Activated B cell treated with CpG ODN at 0.5 μM for 24 hours (primary cell): ENCODE measurements at regions of chr6 and their contacts with region 1.

Region 1: DNA sequence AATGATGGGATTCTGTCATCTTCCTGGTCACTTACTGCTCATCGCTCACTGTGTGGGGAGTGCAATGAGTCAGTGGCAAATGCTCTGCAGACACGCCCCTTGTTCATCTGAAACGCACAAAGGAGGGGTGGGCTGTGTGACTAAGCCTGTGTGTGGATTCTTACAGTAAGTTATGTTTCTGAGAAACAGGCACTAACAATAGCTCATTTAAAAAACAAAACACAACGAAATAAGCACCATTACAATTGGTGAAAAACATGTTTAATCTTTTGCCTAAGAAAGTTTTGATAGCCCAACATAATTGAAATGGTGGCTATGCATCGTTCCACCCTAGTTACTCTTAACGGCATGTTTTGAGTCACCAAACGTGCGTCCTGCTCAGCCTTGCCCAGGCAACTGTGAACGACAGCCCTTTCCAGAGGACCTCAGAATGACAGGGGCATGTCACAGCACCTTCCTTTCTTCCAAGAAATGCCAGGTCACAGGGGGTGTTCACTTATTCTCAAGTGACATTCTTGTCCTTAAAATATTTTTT is 118.4 kb upstream of the SGK1 start:
- DNase-seq: no peak
- ATAC-seq: peak; percentile 90
- H3K4me3 Mint-ChIP-seq: peak overlapping the region; percentile 70
- H3K27ac Mint-ChIP-seq: peak overlapping the region; percentile 79
- H3K4me1 Mint-ChIP-seq: peaks cover 23% of the 10 kb centered on the region
- H3K27me3 Mint-ChIP-seq: no peaks in the 10 kb centered on the region
- CTCF ChIP-seq: no peak

Region 2: GRCh38 chr6:133644892-133645619 is 791.3 kb before region 1 on chr6:
- CTCF ChIA-PET with region 1: no interaction called
- POLR2A ChIA-PET with region 1: no interaction called
- intact Hi-C with region 1: no loop called
- DNase-seq: no peak
- ATAC-seq: no peak
- H3K4me3 Mint-ChIP-seq: no peak overlapping the region
- H3K27ac Mint-ChIP-seq: no peak overlapping the region
- H3K4me1 Mint-ChIP-seq: no peaks in the 10 kb centered on the region
- H3K27me3 Mint-ChIP-seq: no peaks in the 10 kb centered on the region
- CTCF ChIP-seq: no peak

Region 3: DNA sequence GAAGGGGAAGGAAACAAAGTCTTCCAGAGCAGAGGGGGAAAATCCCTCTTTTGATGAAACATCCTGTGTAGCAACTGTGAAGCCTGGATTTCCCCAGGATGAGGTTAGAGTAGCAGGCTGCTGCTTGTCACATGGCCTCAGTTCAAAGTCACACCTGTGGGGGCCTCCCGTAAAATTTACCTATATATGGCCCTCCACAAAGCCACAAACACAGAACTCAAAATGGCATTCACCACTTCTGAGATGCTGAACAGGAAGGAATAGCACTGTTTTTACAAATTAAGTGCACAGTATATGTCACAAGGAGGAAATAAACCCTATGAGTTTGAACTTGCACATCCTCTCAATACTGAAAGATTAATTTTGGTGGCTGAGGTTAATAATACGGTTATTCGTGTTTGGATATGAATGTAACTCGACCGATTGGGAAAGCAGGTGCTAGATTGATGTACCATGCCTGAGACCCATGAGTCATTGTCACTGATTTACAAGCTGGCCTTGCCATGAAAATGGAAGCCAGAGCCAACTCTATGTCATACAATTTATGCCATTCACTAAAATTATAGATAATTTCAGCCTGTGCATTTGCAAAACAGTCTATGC is 189.0 kb before region 1 on chr6:
- CTCF ChIA-PET with region 1: no interaction called
- POLR2A ChIA-PET with region 1: no interaction called
- intact Hi-C with region 1: loop called (anchors 2 kb)
- DNase-seq: peak; percentile 44
- ATAC-seq: peak; percentile 82
- H3K4me3 Mint-ChIP-seq: peak overlapping the region; percentile 47
- H3K27ac Mint-ChIP-seq: peak overlapping the region; percentile 97
- H3K4me1 Mint-ChIP-seq: peaks cover 59% of the 10 kb centered on the region
- H3K27me3 Mint-ChIP-seq: no peaks in the 10 kb centered on the region
- CTCF ChIP-seq: no peak

Region 4: DNA sequence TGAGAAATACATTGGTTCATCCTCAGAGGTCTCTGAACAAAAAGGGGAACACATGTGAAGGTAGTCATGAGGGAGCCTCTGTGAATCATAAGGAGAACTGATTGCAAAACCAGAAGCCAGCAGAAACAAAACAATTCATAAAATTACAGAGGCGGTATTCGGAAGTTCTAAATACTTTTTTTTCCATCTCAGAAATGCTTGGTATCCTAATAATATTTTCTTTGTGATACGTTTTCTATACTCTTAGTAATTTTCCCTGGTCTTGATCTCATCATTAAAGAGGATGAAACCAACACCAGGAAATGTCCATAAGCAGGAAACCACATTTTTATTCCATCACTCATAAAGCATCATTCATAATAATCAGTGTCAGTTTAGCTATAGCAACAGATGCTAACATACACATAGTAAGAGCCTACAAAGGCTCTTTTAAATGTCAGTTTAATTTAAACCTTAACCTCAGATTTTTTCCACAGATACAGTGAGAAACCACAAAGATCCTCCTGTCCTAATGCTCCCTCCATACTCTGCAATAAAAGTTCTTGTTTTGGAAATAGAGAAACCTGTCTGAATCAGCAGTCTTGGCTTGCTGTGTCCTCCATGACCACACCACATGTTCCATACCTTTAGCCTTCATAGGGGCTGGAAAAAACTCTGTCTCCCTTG is 147.7 kb before region 1 on chr6:
- CTCF ChIA-PET with region 1: no interaction called
- POLR2A ChIA-PET with region 1: no interaction called
- intact Hi-C with region 1: loop called (anchors 2 kb)
- DNase-seq: no peak
- ATAC-seq: peak; percentile 83
- H3K4me3 Mint-ChIP-seq: peak overlapping the region; percentile 16
- H3K27ac Mint-ChIP-seq: peak overlapping the region; percentile 54
- H3K4me1 Mint-ChIP-seq: peaks cover 22% of the 10 kb centered on the region
- H3K27me3 Mint-ChIP-seq: no peaks in the 10 kb centered on the region
- CTCF ChIP-seq: no peak

Region 5: GRCh38 chr6:134373282-134373922 is 62.9 kb before region 1 on chr6:
- CTCF ChIA-PET with region 1: no interaction called
- POLR2A ChIA-PET with region 1: interaction called, 4 read pairs
- intact Hi-C with region 1: loop called (anchors 1 kb)
- DNase-seq: no peak
- ATAC-seq: peak; percentile 97
- H3K4me3 Mint-ChIP-seq: peak overlapping the region; percentile 53
- H3K27ac Mint-ChIP-seq: peak overlapping the region; percentile 71
- H3K4me1 Mint-ChIP-seq: peaks cover 28% of the 10 kb centered on the region
- H3K27me3 Mint-ChIP-seq: no peaks in the 10 kb centered on the region
- CTCF ChIP-seq: no peak

Region 6: DNA sequence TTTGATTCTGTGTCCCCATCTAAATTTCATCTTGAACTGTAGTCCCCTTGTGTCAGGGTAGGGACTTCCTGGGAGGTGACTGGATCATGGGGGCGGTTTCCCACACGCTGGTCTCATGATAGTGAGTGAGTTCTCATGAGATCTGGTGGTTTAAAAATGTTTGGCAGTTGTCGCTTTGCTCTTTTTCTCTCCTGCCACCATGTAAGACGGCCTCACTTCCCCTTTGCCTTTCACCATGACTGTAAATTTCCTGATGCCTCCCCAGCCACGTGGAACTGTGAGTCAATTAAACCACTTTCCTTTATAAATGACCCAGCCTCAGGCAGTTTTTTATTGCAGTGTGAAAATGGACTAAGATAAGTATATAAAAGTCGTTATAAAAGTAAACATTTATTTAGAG is 37.9 kb before region 1 on chr6:
- CTCF ChIA-PET with region 1: no interaction called
- POLR2A ChIA-PET with region 1: no interaction called
- intact Hi-C with region 1: loop called (anchors 1 kb)
- DNase-seq: no peak
- ATAC-seq: peak; percentile 89
- H3K4me3 Mint-ChIP-seq: no peak overlapping the region
- H3K27ac Mint-ChIP-seq: peak overlapping the region; percentile 83
- H3K4me1 Mint-ChIP-seq: peaks cover 20% of the 10 kb centered on the region
- H3K27me3 Mint-ChIP-seq: no peaks in the 10 kb centered on the region
- CTCF ChIP-seq: no peak

Region 7: DNA sequence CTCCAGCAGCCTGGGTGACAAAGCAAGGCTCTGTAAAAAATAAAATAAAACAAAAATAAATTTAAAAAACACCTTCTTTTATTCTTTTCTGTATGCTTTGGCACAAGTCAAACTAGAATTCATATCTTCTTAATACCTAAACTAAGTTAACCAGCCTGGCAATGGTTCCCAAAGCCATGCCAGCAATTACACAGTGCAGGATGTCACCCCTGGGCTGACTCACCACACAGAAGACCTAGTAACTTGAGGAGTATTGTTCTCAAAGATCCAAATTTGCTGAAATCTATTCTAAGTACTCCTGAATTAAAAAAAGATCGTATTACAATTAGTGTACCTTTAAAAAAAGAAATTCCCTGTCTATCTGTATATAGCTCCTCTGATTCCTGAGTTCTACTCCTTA is 44.2 kb after region 1 on chr6:
- CTCF ChIA-PET with region 1: no interaction called
- POLR2A ChIA-PET with region 1: no interaction called
- intact Hi-C with region 1: loop called (anchors 5 kb)
- DNase-seq: no peak
- ATAC-seq: no peak
- H3K4me3 Mint-ChIP-seq: no peak overlapping the region
- H3K27ac Mint-ChIP-seq: no peak overlapping the region
- H3K4me1 Mint-ChIP-seq: no peaks in the 10 kb centered on the region
- H3K27me3 Mint-ChIP-seq: no peaks in the 10 kb centered on the region
- CTCF ChIP-seq: no peak

Region 8: GRCh38 chr6:135962731-135963130 is 1526.4 kb after region 1 on chr6:
- CTCF ChIA-PET with region 1: no interaction called
- POLR2A ChIA-PET with region 1: no interaction called
- intact Hi-C with region 1: no loop called
- DNase-seq: no peak
- ATAC-seq: no peak
- H3K4me3 Mint-ChIP-seq: no peak overlapping the region
- H3K27ac Mint-ChIP-seq: no peak overlapping the region
- H3K4me1 Mint-ChIP-seq: no peaks in the 10 kb centered on the region
- H3K27me3 Mint-ChIP-seq: no peaks in the 10 kb centered on the region
- CTCF ChIP-seq: no peak